ENCODE measurements at regions of chr7 and their contacts with region 1.

Region 1: DNA sequence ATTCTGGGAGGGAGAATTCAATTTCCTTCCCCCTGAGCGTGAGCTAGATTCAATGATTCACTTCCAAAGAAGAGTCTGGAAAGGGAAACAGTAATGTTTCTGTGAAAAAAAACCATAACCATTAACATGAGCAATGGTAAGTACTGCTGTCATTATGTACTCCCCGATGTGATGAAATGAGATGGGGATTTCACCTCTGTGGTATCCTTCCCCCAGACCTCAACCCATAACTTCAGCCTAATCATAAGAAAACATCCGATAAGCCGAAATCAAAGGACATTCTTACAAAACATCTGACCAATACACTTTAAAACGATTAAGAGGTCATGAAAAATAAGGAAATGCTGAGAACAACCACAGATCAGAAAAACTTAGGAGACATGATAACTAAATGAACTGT is 27.2 kb downstream of the EZH2 start:
- DNase-seq: peak; percentile 20
- ATAC-seq: peak; percentile 76
- H3K4me3 Mint-ChIP-seq: peak overlapping the region; percentile 33
- H3K27ac Mint-ChIP-seq: peak overlapping the region; percentile 81
- H3K4me1 Mint-ChIP-seq: peaks cover 39% of the 10 kb centered on the region
- H3K27me3 Mint-ChIP-seq: no peaks in the 10 kb centered on the region
- CTCF ChIP-seq: no peak

Region 2: DNA sequence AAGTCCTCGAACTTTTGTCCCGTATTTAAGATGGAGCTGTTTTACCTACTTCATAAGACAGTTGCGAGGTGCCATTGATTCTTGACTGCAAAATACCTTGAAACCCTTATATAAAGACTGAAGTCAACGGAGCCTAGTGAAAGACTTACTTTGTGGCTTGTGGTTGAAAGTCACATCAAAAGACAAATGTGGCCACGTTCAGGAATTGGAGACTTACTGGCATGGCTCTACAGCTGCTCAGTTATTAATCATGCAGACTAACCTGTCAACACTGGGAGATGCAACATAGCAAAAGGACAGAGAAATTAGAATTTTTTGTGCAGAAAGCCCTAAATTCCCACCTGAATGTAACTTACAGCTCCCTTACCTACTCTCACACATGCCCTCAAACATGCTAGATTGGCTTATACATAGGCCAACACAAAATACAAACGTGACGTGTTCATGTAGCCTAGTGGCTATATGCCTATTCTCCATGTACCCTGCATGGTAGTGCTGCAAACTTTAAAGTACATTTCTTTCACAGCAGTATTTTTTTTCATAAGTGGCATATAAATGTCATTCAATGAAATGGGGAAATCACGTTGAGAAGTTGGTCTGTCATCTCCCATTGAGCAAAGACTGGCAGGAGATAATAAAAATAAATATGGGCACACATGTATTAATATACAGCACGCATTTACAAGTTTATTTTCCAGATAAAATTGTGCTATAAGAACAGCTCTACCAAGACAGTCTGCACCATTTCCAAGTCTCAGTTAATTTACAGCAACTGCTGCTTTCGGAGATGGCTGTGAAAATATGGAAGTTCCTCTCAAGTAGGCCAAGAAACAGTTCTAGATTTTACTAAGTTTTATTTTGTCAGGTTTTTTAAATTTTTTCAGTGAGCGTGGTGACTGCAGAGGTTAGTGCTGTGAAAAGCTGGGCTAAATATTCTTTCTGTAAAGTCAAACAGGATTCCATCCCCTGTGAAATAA is 436.7 kb before region 1 on chr7:
- CTCF ChIA-PET with region 1: no interaction called
- POLR2A ChIA-PET with region 1: no interaction called
- intact Hi-C with region 1: no loop called
- DNase-seq: no peak
- ATAC-seq: no peak
- H3K4me3 Mint-ChIP-seq: no peak overlapping the region
- H3K27ac Mint-ChIP-seq: no peak overlapping the region
- H3K4me1 Mint-ChIP-seq: no peaks in the 10 kb centered on the region
- H3K27me3 Mint-ChIP-seq: peaks cover 36% of the 10 kb centered on the region
- CTCF ChIP-seq: no peak

Region 3: DNA sequence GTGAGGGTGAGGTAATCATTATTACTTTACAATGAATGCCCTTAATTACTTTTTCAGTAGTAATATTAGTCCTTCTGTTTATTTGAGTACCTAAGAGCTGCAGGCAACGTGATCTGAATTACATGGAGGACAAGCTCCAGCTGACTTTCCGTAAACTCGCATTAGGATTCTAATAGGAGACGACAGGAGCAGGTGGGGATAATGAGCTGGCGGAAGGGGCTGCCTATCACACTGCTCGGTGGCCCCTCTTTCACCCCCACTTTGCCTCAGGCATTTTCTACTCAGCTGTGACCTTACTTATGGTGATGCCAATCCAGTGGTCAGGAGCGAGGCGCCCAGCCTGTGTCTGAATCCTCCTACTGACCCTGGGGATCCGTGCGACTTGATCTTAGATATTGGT is 266.4 kb before region 1 on chr7 and contains the start of gene C7orf33:
- CTCF ChIA-PET with region 1: no interaction called
- POLR2A ChIA-PET with region 1: no interaction called
- intact Hi-C with region 1: no loop called
- DNase-seq: no peak
- ATAC-seq: no peak
- H3K4me3 Mint-ChIP-seq: no peak within 1 kb of the TSS
- H3K27ac Mint-ChIP-seq: no peak within 1 kb of the TSS
- H3K4me1 Mint-ChIP-seq: no peaks in the 10 kb centered on the region
- H3K27me3 Mint-ChIP-seq: peaks cover 5% of the 10 kb centered on the region
- CTCF ChIP-seq: no peak
- total RNA-seq, gene C7orf33: not detected

Region 4: DNA sequence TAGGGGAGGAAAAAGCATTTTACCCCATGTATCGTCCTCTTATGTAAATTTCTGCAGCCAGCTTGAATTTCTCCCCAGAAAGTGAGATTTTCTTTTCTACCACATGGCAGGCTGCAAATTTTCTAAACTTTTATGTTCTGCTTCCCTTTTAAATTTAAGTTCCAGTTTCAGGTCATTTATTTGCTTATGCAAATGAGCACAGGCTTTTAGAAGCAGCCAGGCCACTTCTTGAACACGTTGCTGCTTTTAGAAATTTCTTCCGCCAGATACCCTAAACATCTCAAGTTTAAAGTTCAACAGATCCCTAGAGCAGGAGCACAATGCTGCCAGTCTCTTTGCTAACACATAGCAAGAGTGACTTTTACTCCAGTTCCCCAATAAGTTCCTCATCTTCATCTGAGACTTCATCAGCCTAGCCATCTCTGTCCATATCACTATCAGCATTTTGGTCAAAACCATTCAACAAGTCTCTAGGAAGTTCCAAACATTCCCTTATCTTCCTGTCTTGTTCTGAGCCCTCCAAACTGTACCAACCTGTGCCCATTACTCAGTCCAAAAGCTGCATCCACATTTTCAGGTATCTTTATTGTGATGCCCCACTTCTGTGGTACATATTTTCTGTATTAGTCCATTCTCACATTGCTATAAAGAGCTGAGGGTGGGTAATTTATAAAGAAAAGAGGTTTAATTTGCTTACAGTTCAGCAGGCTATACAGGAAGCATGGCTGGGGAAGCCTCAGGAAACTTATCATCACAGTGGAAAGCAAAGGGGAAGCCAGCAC is 10.9 kb after region 1 on chr7:
- CTCF ChIA-PET with region 1: interaction called, 10 read pairs
- POLR2A ChIA-PET with region 1: interaction called, 4 read pairs
- intact Hi-C with region 1: no loop called
- DNase-seq: no peak
- ATAC-seq: no peak
- H3K4me3 Mint-ChIP-seq: no peak overlapping the region
- H3K27ac Mint-ChIP-seq: no peak overlapping the region
- H3K4me1 Mint-ChIP-seq: peaks cover 58% of the 10 kb centered on the region
- H3K27me3 Mint-ChIP-seq: no peaks in the 10 kb centered on the region
- CTCF ChIP-seq: no peak

Measured in activated CD8-positive, alpha-beta T cell treated with anti-CD3 and anti-CD28 coated beads for 36 hours (primary cell).